ENCODE measurements at regions of chr6 and their contacts with region 1.

Region 1: GRCh38 chr6:17987576-17988421 is at the start of gene KIF13A:
- DNase-seq: peak; percentile 80 to 90
- ATAC-seq: peak; percentile 83
- H3K4me3 ChIP-seq: peak within 1 kb of the TSS; percentile 72 to 86
- H3K27ac ChIP-seq: peak within 1 kb of the TSS; percentile 82 to 98
- H3K4me1 ChIP-seq: no peaks in the 10 kb centered on the region
- H3K27me3 ChIP-seq: no peaks in the 10 kb centered on the region
- total RNA-seq, gene KIF13A: 89.2 to 109 TPM

Region 2: DNA sequence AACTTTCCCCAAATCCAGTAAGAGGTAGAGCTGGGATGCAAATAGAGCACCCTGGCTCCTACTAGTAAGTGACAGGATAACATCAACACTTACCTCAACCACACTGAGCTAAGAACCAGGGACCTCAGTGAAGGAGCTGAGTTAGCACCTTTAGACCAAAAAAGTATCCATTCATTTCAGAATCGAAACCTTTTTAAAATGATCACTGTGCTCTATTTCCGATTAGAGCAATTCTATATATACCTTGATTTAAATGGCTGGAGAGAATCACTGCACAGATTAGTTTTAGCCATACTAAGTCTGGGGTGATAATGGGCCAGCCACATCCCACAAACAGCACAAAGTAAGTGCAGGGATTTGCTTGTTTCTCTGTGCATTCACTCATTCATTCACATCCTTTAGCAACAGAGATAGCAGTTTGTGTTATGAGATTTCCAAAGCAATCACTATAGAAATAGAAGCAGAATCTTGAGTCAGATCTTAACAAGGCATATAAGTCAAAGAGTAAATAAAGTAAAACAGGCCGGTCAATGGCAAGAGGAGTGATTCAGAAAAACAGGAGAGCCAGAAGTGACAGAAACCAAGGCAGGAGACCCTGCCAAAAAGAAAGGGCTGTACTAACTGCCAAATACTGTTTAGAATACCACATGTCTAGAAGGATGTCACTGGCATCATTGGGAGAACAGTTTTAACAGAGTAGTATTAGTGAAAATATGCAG is 136.6 kb before region 1 on chr6:
- intact Hi-C with region 1: loop called in 1 of 2 experiments (anchors 5 kb)
- DNase-seq: no peak
- ATAC-seq: no peak
- H3K4me3 ChIP-seq: no peak overlapping the region
- H3K27ac ChIP-seq: peak overlapping the region; percentile 64 to 74
- H3K4me1 ChIP-seq: peaks cover 1 to 4% of the 10 kb centered on the region in 2 donors
- H3K27me3 ChIP-seq: no peaks in the 10 kb centered on the region

Region 3: GRCh38 chr6:17907406-17908229 is 80.2 kb before region 1 on chr6:
- intact Hi-C with region 1: loop called in 1 of 2 experiments (anchors 5 kb)
- DNase-seq: peak; percentile 77 to 81
- ATAC-seq: peak; percentile 84
- H3K4me3 ChIP-seq: no peak overlapping the region
- H3K27ac ChIP-seq: no peak overlapping the region
- H3K4me1 ChIP-seq: peaks cover 10% of the 10 kb centered on the region in 2 donors
- H3K27me3 ChIP-seq: no peaks in the 10 kb centered on the region

Region 4: DNA sequence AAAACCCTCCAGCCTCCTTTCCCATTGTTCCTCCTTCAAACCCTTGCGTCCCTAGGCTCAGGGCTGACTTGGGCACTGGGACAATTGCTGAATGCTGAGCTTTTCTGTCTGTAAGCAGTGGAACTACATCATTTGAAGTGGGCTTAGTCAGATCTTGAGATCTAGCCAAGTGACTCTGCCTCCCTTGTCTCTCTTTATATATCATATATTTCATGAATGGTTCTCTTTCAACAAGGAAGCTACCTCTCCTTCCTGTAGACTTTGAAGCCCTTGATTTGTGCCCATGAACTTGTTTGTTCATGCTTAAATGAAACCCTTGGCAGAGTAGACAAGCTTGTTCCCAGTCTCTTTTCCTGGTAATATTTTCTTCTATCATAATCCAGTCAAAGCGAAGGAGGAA is 59.6 kb after region 1 on chr6:
- intact Hi-C with region 1: loop called (anchors 5 kb)
- DNase-seq: no peak
- ATAC-seq: no peak
- H3K4me3 ChIP-seq: no peak overlapping the region
- H3K27ac ChIP-seq: peak overlapping the region; percentile 26 to 48
- H3K4me1 ChIP-seq: peaks cover 4 to 10% of the 10 kb centered on the region in 2 donors
- H3K27me3 ChIP-seq: no peaks in the 10 kb centered on the region

Region 5: DNA sequence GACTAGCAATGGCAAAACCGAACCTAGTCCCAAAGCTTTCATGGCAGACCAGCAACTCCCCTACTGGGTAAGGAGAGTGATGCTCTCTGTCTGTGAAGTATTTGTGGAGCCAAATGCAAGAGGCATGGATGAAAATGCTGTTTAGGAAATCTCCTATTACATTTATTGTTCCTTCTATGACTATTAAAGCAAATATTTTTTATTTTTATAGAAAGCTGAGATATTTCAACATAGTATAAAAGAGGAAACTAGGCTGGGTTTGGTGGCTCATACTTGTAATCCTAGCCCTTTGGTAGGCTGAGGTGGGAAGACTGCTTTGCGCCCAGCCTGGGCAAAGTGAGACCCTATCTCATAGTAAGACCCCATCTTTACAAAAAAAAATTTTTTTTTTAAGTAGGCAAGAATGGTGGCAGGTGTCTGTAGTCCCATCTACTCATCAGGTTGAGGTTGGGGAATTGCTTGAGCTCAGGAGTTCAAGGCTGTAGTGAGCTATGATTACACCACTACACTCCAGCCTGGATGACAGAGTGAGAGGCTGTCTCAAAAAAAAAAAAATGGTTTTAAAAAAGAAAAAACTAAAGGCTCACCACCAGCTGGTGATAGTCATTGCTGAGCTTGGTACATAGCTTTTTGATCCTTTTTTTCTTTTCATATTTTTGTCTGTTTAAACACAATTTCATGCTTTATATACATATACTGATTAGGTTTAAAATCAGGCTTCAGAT is 178.7 kb after region 1 on chr6:
- intact Hi-C with region 1: no loop called
- DNase-seq: no peak
- ATAC-seq: no peak
- H3K4me3 ChIP-seq: no peak overlapping the region
- H3K27ac ChIP-seq: no peak overlapping the region
- H3K4me1 ChIP-seq: no peaks in the 10 kb centered on the region
- H3K27me3 ChIP-seq: no peaks in the 10 kb centered on the region